ENCODE measurements at regions of chr3 and their contacts with region 1.

Region 1: GRCh38 chr3:100352296-100353231 is 18.0 kb downstream of the NIT2 start:
- DNase-seq: no peak
- H3K4me3 Mint-ChIP-seq: no peak overlapping the region
- H3K27ac Mint-ChIP-seq: no peak overlapping the region
- H3K4me1 Mint-ChIP-seq: no peaks in the 10 kb centered on the region
- H3K27me3 Mint-ChIP-seq: no peaks in the 10 kb centered on the region
- CTCF ChIP-seq: no peak

Region 2: DNA sequence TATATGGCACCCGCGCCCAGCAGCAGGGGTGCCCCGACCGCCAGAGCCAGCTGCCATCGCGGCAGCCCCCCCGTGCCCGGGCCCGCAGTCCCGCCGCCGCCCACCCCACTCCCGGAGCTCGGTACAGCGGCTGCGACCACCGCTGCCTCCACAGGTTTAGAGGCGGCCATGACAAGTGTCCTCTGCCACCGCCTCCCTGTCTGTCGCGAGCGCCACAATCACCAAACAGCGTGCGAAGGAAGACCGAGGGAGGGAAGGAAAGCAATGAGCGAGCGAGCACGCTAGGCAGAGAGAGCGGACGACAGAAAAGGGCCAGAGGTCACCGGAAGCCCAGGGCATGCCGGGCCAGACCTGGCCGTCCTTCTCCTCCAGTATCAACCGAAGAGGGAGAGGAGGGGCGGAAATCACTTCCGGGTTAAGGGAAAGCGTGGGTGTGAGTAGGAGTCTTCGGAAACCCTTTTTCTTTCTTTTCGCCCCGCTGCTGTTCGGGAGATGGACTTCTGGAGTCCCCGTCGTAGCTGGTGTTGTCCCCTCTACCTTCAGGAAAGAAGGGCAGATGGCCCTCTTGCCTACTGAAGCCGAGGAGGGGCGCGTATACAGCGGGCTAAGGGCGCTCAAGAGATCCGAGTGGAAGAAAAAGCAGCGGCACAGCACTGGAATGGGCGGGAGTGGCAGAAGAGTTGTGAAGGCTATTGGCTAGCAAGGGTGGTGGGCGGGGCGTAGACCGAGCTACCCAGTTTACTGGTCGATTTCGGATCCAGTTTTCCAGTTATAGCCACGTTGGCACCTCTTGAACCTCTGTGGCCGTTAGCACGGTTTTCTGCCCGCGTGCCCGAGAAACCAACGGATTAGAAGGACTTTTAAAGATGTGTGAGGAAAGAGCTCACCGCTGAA is 48.5 kb after region 1 on chr3 and contains the starts of genes LNP1 and TOMM70:
- CTCF ChIA-PET with region 1: interaction called, 10 read pairs
- intact Hi-C with region 1: no loop called
- DNase-seq: peak; percentile 96
- H3K4me3 Mint-ChIP-seq: peak within 1 kb of the TSS; percentile 85
- H3K27ac Mint-ChIP-seq: peak within 1 kb of the TSS; percentile 98
- H3K4me1 Mint-ChIP-seq: peaks cover under 1% of the 10 kb centered on the region
- H3K27me3 Mint-ChIP-seq: no peaks in the 10 kb centered on the region
- CTCF ChIP-seq: no peak
- total RNA-seq, gene LNP1: 1.2 and 1.8 TPM in 2 replicates
- total RNA-seq, gene TOMM70: 49.5 and 49.9 TPM in 2 replicates